ENCODE measurements at regions of chr19 and their contacts with region 1.

Region 1: GRCh38 chr19:50329146-50329925 is at the start of gene KCNC3:
- DNase-seq: peak; percentile 99 to 100
- H3K4me3 ChIP-seq: peak within 1 kb of the TSS; percentile 68
- H3K4me3 Mint-ChIP-seq: peak within 1 kb of the TSS; percentile 99
- H3K27ac Mint-ChIP-seq: peak within 1 kb of the TSS; percentile 100
- H3K4me1 ChIP-seq: peaks cover 35% of the 10 kb centered on the region
- H3K4me1 Mint-ChIP-seq: peaks cover 49% of the 10 kb centered on the region
- H3K27me3 ChIP-seq: no peaks in the 10 kb centered on the region
- H3K27me3 Mint-ChIP-seq: peaks cover 10% of the 10 kb centered on the region
- CTCF ChIP-seq: no peak
- total RNA-seq, gene KCNC3: 20.6 and 24.6 TPM in 2 replicates

Region 2: GRCh38 chr19:50147462-50148423 is 181.6 kb before region 1 on chr19:
- CTCF ChIA-PET with region 1: interaction called, 23 read pairs
- POLR2A ChIA-PET with region 1: interaction called, 4 read pairs
- intact Hi-C with region 1: no loop called
- DNase-seq: peak; percentile 94 to 96
- H3K4me3 ChIP-seq: peak overlapping the region; percentile 85
- H3K4me3 Mint-ChIP-seq: peak overlapping the region; percentile 82
- H3K27ac Mint-ChIP-seq: peak overlapping the region; percentile 50
- H3K4me1 ChIP-seq: no peaks in the 10 kb centered on the region; the same call in 1 of the 2 replicates
- H3K4me1 Mint-ChIP-seq: no peaks in the 10 kb centered on the region
- H3K27me3 ChIP-seq: no peaks in the 10 kb centered on the region
- H3K27me3 Mint-ChIP-seq: peaks cover 2% of the 10 kb centered on the region
- CTCF ChIP-seq: peak; percentile 40 to 92

Region 3: GRCh38 chr19:50315773-50316448 is 13.4 kb before region 1 on chr19:
- CTCF ChIA-PET with region 1: interaction called, 16 read pairs
- POLR2A ChIA-PET with region 1: interaction called, 17 read pairs
- intact Hi-C with region 1: no loop called
- DNase-seq: peak; percentile 58 to 68
- H3K4me3 ChIP-seq: peak overlapping the region; percentile 40
- H3K4me3 Mint-ChIP-seq: peak overlapping the region; percentile 75
- H3K27ac Mint-ChIP-seq: peak overlapping the region; percentile 14
- H3K4me1 ChIP-seq: peaks cover 11% of the 10 kb centered on the region; the same call in 1 of the 2 replicates
- H3K4me1 Mint-ChIP-seq: peaks cover 17% of the 10 kb centered on the region
- H3K27me3 ChIP-seq: no peaks in the 10 kb centered on the region; the same call in 1 of the 2 replicates
- H3K27me3 Mint-ChIP-seq: peaks cover 9% of the 10 kb centered on the region
- CTCF ChIP-seq: no peak

Region 4: DNA sequence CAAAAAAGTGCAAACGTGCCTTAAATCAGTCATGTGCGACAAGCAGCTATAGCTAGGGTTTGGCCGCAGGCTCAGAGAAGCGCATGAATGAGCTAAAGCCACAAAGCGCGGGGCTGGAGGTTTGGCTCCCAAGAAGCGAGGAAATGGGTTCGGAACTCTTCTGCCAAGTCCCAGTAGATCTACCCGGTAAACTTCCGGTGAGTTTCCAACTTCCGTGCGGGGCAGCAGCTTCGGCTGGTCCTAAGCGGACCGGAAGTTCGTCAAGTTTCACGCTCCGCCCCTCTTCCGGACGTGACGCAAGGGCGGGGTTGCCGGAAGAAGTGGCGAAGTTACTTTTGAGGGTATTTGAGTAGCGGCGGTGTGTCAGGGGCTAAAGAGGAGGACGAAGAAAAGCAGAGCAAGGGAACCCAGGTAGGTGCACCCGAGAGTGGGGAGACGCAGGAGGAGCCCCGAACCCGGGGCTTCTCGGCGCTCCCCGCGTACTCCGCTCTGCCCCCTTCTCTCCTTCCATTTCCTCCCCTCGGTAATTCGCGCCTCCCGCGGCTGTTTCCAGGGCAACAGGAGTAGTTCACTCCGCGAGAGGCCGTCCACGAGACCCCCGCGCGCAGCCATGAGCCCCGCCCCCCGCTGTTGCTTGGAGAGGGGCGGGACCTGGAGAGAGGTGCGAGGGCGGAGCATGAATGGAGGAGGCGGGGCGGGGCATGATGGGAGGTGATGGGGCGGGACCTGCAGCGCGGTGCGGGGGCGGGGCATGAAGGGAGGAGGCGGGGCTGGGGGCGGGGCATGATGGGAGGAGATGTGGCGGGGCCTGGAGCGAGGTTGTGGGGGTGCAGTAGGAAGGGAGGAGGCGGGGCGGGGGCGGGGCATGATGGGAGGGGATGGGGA is 47.1 kb after region 1 on chr19 and contains the start of gene NR1H2:
- CTCF ChIA-PET with region 1: no interaction called
- POLR2A ChIA-PET with region 1: interaction called, 6 read pairs
- intact Hi-C with region 1: loop called (anchors 1 kb)
- DNase-seq: peak; percentile 95 to 96
- H3K4me3 ChIP-seq: peak within 1 kb of the TSS; percentile 72
- H3K4me3 Mint-ChIP-seq: peak within 1 kb of the TSS; percentile 99
- H3K27ac Mint-ChIP-seq: peak within 1 kb of the TSS; percentile 100
- H3K4me1 ChIP-seq: no peaks in the 10 kb centered on the region
- H3K4me1 Mint-ChIP-seq: no peaks in the 10 kb centered on the region
- H3K27me3 ChIP-seq: no peaks in the 10 kb centered on the region
- H3K27me3 Mint-ChIP-seq: no peaks in the 10 kb centered on the region
- CTCF ChIP-seq: no peak
- total RNA-seq, gene NR1H2: 38.3 and 40.3 TPM in 2 replicates

Region 5: DNA sequence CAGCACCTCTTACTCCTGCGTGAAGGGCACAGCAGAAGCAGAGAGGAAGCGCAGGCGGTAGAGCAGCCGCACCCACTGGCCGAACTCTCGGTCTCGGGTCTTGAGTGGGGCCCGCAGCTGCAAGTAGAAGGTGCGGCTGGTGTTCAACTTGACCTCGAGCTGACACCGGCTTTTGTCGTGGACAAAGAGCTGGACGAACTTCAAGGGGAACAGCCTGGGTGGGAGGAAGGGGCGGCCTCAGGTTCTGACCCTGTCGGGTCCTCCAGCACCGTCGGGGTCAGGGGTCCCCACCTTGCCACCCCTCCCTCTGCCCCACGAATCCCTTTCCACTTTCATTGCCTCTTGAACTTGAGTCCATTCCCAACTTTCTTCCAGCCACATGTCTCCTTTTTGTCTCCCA is 138.3 kb after region 1 on chr19:
- CTCF ChIA-PET with region 1: interaction called, 12 read pairs
- POLR2A ChIA-PET with region 1: no interaction called
- intact Hi-C with region 1: no loop called
- DNase-seq: no peak
- H3K4me3 ChIP-seq: no peak overlapping the region
- H3K4me3 Mint-ChIP-seq: no peak overlapping the region
- H3K27ac Mint-ChIP-seq: no peak overlapping the region
- H3K4me1 ChIP-seq: peaks cover 6% of the 10 kb centered on the region; the same call in 1 of the 2 replicates
- H3K4me1 Mint-ChIP-seq: no peaks in the 10 kb centered on the region
- H3K27me3 ChIP-seq: no peaks in the 10 kb centered on the region
- H3K27me3 Mint-ChIP-seq: no peaks in the 10 kb centered on the region
- CTCF ChIP-seq: no peak

Region 6: GRCh38 chr19:50478901-50479736 is 149.8 kb after region 1 on chr19:
- CTCF ChIA-PET with region 1: no interaction called
- POLR2A ChIA-PET with region 1: no interaction called
- intact Hi-C with region 1: no loop called
- DNase-seq: peak in 1 of 2 experiments; percentile 63
- H3K4me3 ChIP-seq: no peak overlapping the region
- H3K4me3 Mint-ChIP-seq: peak overlapping the region; percentile 43
- H3K27ac Mint-ChIP-seq: peak overlapping the region; percentile 70
- H3K4me1 ChIP-seq: no peaks in the 10 kb centered on the region
- H3K4me1 Mint-ChIP-seq: no peaks in the 10 kb centered on the region
- H3K27me3 ChIP-seq: no peaks in the 10 kb centered on the region
- H3K27me3 Mint-ChIP-seq: no peaks in the 10 kb centered on the region
- CTCF ChIP-seq: peak; percentile 66 to 71

Region 7: GRCh38 chr19:50511068-50511822 is 181.9 kb after region 1 on chr19 and contains the start of gene JOSD2:
- CTCF ChIA-PET with region 1: interaction called, 6 read pairs
- POLR2A ChIA-PET with region 1: interaction called, 10 read pairs
- intact Hi-C with region 1: no loop called
- DNase-seq: peak; percentile 98 to 99
- H3K4me3 ChIP-seq: peak within 1 kb of the TSS; percentile 58
- H3K4me3 Mint-ChIP-seq: peak within 1 kb of the TSS; percentile 76
- H3K27ac Mint-ChIP-seq: peak within 1 kb of the TSS; percentile 89
- H3K4me1 ChIP-seq: peaks cover 4% of the 10 kb centered on the region; the same call in 1 of the 2 replicates
- H3K4me1 Mint-ChIP-seq: peaks cover 7% of the 10 kb centered on the region
- H3K27me3 ChIP-seq: no peaks in the 10 kb centered on the region
- H3K27me3 Mint-ChIP-seq: no peaks in the 10 kb centered on the region
- CTCF ChIP-seq: no peak
- total RNA-seq, gene JOSD2: 27.7 and 27.9 TPM in 2 replicates

Region 8: DNA sequence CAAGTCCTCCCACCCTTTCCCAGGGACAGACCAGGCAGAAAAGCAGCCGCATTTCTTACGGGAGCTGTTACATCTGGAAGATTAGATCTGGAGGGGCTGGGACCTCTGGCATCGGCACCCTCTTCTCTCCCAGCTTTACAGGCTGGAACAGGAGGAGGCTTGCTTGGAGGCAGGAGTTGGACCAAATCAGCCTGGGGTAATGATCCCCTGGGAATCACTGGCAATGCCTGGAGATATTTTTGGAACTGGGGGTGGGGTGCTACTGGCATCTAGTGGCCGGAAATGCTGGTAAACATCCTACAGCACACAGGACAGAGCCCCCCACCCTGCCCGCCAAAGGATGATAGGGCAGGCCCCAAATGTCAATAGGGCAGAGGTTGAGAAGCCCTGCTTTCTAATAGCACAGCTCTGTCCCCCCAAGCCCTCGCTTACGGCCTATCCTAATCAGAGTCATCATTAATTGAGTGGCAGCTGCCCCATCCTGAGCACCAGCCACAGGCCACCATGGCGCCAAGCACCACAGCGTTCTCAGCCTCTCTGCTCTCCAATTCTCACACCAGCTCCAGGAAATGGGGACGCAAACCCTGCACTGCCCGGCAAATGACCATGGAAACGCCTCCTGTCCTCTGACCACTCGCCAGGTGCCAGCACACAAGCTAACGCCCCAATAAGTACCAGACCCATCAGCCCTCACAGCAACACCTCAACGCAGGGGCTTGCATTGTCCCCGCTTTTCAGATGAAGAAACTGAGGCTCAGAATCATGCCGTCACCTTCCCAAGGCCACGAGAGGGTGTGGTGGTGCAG is 218.3 kb after region 1 on chr19:
- CTCF ChIA-PET with region 1: no interaction called
- POLR2A ChIA-PET with region 1: no interaction called
- intact Hi-C with region 1: no loop called
- DNase-seq: no peak
- H3K4me3 ChIP-seq: no peak overlapping the region
- H3K4me3 Mint-ChIP-seq: no peak overlapping the region
- H3K27ac Mint-ChIP-seq: no peak overlapping the region
- H3K4me1 ChIP-seq: no peaks in the 10 kb centered on the region
- H3K4me1 Mint-ChIP-seq: no peaks in the 10 kb centered on the region
- H3K27me3 ChIP-seq: peaks cover 2% of the 10 kb centered on the region; the same call in 1 of the 2 replicates
- H3K27me3 Mint-ChIP-seq: peaks cover 22% of the 10 kb centered on the region
- CTCF ChIP-seq: peak in 1 of 2 experiments; percentile 26

Region 9: GRCh38 chr19:50590191-50590590 is 260.9 kb after region 1 on chr19:
- CTCF ChIA-PET with region 1: no interaction called
- POLR2A ChIA-PET with region 1: no interaction called
- intact Hi-C with region 1: no loop called
- DNase-seq: no peak
- H3K4me3 ChIP-seq: no peak overlapping the region
- H3K4me3 Mint-ChIP-seq: no peak overlapping the region
- H3K27ac Mint-ChIP-seq: no peak overlapping the region
- H3K4me1 ChIP-seq: no peaks in the 10 kb centered on the region
- H3K4me1 Mint-ChIP-seq: no peaks in the 10 kb centered on the region
- H3K27me3 ChIP-seq: no peaks in the 10 kb centered on the region
- H3K27me3 Mint-ChIP-seq: peaks cover 3% of the 10 kb centered on the region
- CTCF ChIP-seq: no peak

Measured in Caco-2 (cell line).